HEK293 (cell line): ENCODE measurements at regions of chr22 and their contacts with region 1.

Region 1: DNA sequence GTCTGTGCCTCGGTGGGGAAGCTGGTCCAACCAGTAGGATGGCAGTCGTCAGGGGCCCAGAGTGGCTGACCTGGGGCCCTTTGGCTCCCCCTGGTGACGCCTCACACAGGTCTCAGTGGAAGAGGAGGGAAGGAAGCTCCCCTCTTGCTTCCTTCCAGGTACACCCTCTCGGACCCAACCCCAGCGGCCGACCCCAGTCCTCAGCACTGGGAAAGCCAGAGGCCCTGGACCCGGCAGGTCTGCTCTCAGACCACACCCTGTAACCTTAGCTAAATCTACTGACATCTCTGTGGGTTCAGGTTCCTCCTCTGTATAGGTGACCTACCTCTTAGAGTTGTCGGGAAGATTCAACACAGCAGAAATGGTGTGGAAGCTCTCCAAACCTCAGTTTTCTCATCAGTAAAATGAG is 3.4 kb upstream of the SCUBE1 start:
- H3K4me3 ChIP-seq: no peak overlapping the region
- H3K27ac ChIP-seq: no peak overlapping the region
- H3K4me1 ChIP-seq: no peaks in the 10 kb centered on the region; the same call in 1 of the 2 replicates
- CTCF ChIP-seq: peak; percentile 84

Region 2: DNA sequence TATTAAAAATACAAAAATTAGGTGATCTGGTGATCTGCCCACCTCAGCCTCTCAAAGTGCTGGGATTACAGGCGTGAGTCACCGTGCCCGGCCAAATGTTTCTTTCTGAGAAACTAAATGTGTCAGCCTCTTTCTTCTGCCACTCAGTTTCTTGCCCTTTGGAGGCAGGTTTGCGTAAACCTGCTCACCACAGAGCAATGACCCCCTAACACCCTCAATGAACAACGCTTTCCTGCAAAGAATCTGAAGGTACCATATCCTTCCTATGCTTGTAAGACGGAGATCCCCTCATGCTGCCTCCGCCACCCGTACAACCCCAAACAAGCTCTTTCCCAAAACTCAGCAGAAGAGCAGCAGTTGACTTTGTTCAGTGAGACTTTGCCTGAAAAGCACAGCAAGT is 120.9 kb before region 1 on chr22:
- CTCF ChIA-PET with region 1: interaction called, 130 read pairs
- POLR2A ChIA-PET with region 1: no interaction called
- H3K4me3 ChIP-seq: no peak overlapping the region
- H3K27ac ChIP-seq: no peak overlapping the region
- H3K4me1 ChIP-seq: no peaks in the 10 kb centered on the region
- CTCF ChIP-seq: no peak

Region 3: GRCh38 chr22:43273902-43274484 is 72.5 kb before region 1 on chr22:
- CTCF ChIA-PET with region 1: interaction called, 318 read pairs
- POLR2A ChIA-PET with region 1: interaction called, 15 read pairs
- H3K4me3 ChIP-seq: no peak overlapping the region
- H3K27ac ChIP-seq: no peak overlapping the region
- H3K4me1 ChIP-seq: peaks cover 13% of the 10 kb centered on the region
- CTCF ChIP-seq: peak; percentile 78

Region 4: DNA sequence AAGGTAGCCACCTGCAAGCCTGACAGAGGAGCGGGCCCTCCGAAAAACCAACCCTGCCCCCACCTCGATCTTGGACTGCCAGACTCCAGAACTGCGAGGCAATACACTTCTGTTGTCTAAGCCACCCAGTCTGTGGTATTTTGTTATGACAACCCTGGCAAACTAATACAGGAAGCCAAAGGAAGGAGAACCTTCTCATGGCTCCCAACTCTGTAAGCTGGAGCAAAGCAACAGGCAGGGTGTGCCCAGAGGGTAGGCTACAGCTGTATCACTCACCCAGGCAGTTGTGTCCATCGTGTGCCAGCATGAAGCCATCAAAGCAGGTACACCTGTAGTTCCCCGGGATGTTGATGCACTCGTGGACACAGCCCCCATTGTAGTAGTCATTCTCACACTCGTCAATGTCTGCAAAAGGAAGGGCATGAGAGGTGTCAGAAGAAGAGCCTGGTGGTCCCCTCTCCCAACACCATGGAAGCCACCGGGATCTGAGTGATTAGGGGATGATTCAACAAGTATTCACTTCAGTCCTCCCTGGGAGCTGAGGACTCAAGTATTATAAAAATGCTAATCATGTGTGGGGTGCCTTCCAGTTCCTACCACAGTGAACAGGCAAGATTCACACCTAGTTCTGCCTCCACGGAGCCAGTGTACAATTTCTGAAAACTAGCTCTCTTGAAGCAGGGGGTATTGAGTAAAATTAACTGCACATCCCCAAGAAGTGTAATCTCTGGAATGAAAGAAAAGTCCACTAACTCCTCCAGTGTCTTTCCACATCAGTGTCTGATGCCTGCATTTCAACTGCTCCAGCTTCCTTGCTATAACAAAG is 26.7 kb before region 1 on chr22:
- CTCF ChIA-PET with region 1: interaction called, 11 read pairs
- POLR2A ChIA-PET with region 1: no interaction called
- H3K4me3 ChIP-seq: no peak overlapping the region
- H3K27ac ChIP-seq: no peak overlapping the region
- H3K4me1 ChIP-seq: peaks cover 6% of the 10 kb centered on the region; the same call in 1 of the 2 replicates
- CTCF ChIP-seq: no peak

Region 5: DNA sequence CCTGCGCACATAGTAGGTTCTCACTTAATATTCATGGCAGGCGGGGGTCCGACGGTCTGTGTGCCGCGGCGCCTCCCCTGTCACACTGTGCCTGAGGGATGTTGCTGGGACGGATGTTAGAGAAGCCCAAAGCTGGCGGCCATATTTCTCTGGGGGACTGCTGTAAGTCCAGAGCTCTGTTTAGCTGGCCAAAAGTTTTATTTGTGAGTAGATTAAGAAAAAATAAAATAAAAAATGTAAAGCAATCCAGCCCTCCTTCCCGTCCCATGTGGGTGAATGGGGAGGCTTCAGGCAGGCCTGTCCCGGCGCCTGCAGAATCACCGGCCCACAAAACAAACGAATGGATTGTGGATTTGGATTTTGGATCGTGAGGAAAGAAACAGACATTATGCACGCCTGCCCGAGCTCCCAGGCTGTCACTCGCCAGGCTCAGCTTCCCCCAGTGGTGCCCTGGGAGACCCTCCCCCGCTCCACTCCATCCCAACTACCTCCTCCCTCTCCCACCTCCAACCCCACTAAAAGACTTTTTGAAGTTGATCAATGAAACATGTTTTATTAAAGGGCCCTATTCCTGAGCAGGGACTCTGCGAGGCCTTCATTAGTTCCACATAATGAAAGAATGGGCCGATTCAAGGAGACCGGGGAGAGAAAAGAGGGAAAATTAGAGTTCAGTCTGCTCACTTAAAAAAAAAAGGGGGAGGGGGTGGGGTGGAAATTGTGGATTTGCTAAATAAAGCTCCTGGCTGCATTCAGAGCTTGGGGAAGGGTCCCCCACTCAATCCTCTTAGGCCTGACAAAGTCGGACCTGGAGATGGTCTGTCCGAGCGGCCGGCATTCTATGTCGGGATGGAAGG is 17.0 kb after region 1 on chr22:
- CTCF ChIA-PET with region 1: interaction called, 32 read pairs
- POLR2A ChIA-PET with region 1: no interaction called
- H3K4me3 ChIP-seq: no peak overlapping the region
- H3K27ac ChIP-seq: no peak overlapping the region
- H3K4me1 ChIP-seq: no peaks in the 10 kb centered on the region
- CTCF ChIP-seq: no peak

Region 6: GRCh38 chr22:43385770-43386641 is 39.5 kb after region 1 on chr22:
- CTCF ChIA-PET with region 1: interaction called, 15 read pairs
- POLR2A ChIA-PET with region 1: no interaction called
- H3K4me3 ChIP-seq: no peak overlapping the region
- H3K27ac ChIP-seq: no peak overlapping the region
- H3K4me1 ChIP-seq: no peaks in the 10 kb centered on the region
- CTCF ChIP-seq: peak; percentile 89